ENCODE measurements at regions of chr12 and their contacts with region 1.

Region 1: GRCh38 chr12:52278541-52279421 is 4.3 kb downstream of the KRT86 start:
- DNase-seq: peak; percentile 44 to 60 (median 55)
- H3K4me3 ChIP-seq: no peak overlapping the region
- H3K4me3 Mint-ChIP-seq: peak overlapping the region in 5 of 8 donors; percentile 6 to 55 (median 44)
- H3K27ac ChIP-seq: no peak overlapping the region
- H3K27ac Mint-ChIP-seq: no peak overlapping the region
- H3K4me1 ChIP-seq: no peaks in the 10 kb centered on the region
- H3K4me1 Mint-ChIP-seq: peaks cover 3 to 5% (median 3%) of the 10 kb centered on the region in 4 donors
- H3K27me3 ChIP-seq: no peaks in the 10 kb centered on the region
- H3K27me3 Mint-ChIP-seq: peaks cover 8 to 13% of the 10 kb centered on the region in 2 donors

Region 2: GRCh38 chr12:52221912-52222457 is 56.8 kb before region 1 on chr12:
- CTCF ChIA-PET with region 1: interaction called, 20 read pairs
- POLR2A ChIA-PET with region 1: no interaction called
- intact Hi-C with region 1: no loop called
- DNase-seq: peak in 3 of 5 donors; percentile 13 to 58 (median 16)
- H3K4me3 ChIP-seq: no peak overlapping the region
- H3K4me3 Mint-ChIP-seq: no peak overlapping the region
- H3K27ac ChIP-seq: no peak overlapping the region
- H3K27ac Mint-ChIP-seq: no peak overlapping the region
- H3K4me1 ChIP-seq: no peaks in the 10 kb centered on the region
- H3K4me1 Mint-ChIP-seq: peaks cover 0 to 2% (median 0%) of the 10 kb centered on the region in 4 donors
- H3K27me3 ChIP-seq: peaks cover 8% of the 10 kb centered on the region
- H3K27me3 Mint-ChIP-seq: peaks cover 16 to 41% of the 10 kb centered on the region in 2 donors

Region 3: GRCh38 chr12:52250048-52250990 is 28.5 kb before region 1 on chr12:
- CTCF ChIA-PET with region 1: interaction called, 14 read pairs
- POLR2A ChIA-PET with region 1: no interaction called
- intact Hi-C with region 1: no loop called
- DNase-seq: no peak
- H3K4me3 ChIP-seq: no peak overlapping the region
- H3K4me3 Mint-ChIP-seq: peak overlapping the region in 2 of 8 donors; percentile 10 to 54
- H3K27ac ChIP-seq: no peak overlapping the region
- H3K27ac Mint-ChIP-seq: peak overlapping the region in 3 of 7 donors; percentile 25 to 81 (median 46)
- H3K4me1 ChIP-seq: peaks cover 8% of the 10 kb centered on the region
- H3K4me1 Mint-ChIP-seq: peaks cover 10 to 41% (median 13%) of the 10 kb centered on the region in 4 donors
- H3K27me3 ChIP-seq: no peaks in the 10 kb centered on the region
- H3K27me3 Mint-ChIP-seq: peaks cover 4 to 23% of the 10 kb centered on the region in 2 donors

Region 4: GRCh38 chr12:52295663-52296062 is 16.9 kb after region 1 on chr12:
- CTCF ChIA-PET with region 1: interaction called, 22 read pairs
- POLR2A ChIA-PET with region 1: no interaction called
- intact Hi-C with region 1: no loop called
- DNase-seq: no peak
- H3K4me3 ChIP-seq: no peak overlapping the region
- H3K4me3 Mint-ChIP-seq: no peak overlapping the region
- H3K27ac ChIP-seq: no peak overlapping the region
- H3K27ac Mint-ChIP-seq: peak overlapping the region in 1 of 7 donors; percentile 10
- H3K4me1 ChIP-seq: no peaks in the 10 kb centered on the region
- H3K4me1 Mint-ChIP-seq: peaks cover 0 to 2% (median 0%) of the 10 kb centered on the region in 4 donors
- H3K27me3 ChIP-seq: no peaks in the 10 kb centered on the region
- H3K27me3 Mint-ChIP-seq: peaks cover 13 to 19% of the 10 kb centered on the region in 2 donors

Region 5: GRCh38 chr12:52327052-52327829 is 48.5 kb after region 1 on chr12:
- CTCF ChIA-PET with region 1: interaction called, 20 read pairs
- POLR2A ChIA-PET with region 1: no interaction called
- intact Hi-C with region 1: loop called (anchors 5 kb)
- DNase-seq: peak; percentile 76 to 84 (median 80)
- H3K4me3 ChIP-seq: no peak overlapping the region
- H3K4me3 Mint-ChIP-seq: peak overlapping the region in 1 of 8 donors; percentile 2
- H3K27ac ChIP-seq: no peak overlapping the region
- H3K27ac Mint-ChIP-seq: peak overlapping the region in 2 of 7 donors; percentile 36 to 75
- H3K4me1 ChIP-seq: peaks cover 3% of the 10 kb centered on the region
- H3K4me1 Mint-ChIP-seq: peaks cover 5 to 7% (median 6%) of the 10 kb centered on the region in 4 donors
- H3K27me3 ChIP-seq: no peaks in the 10 kb centered on the region
- H3K27me3 Mint-ChIP-seq: peaks cover 7 to 12% of the 10 kb centered on the region in 2 donors

Region 6: DNA sequence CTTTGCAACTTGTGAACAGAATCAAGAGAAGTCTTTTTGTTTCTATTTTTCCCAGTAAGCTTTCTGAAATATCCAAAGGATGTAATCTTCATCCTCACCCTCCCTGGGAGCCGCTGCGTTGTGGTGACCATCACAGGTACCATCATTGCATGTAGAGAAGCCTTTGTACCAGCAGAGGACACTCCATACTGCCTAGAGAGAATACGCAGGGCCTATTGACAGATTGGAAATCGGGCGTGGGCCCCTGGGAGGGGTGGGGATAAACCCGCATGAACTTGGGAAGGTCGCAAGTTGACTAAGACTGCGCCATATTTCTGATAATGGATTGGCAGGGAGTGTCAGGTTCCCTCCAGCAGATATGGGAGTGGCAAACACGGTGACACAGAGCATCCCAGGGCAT is 388.7 kb after region 1 on chr12:
- CTCF ChIA-PET with region 1: no interaction called
- POLR2A ChIA-PET with region 1: no interaction called
- intact Hi-C with region 1: no loop called
- DNase-seq: no peak
- H3K4me3 ChIP-seq: no peak overlapping the region
- H3K4me3 Mint-ChIP-seq: no peak overlapping the region
- H3K27ac ChIP-seq: no peak overlapping the region
- H3K27ac Mint-ChIP-seq: no peak overlapping the region
- H3K4me1 ChIP-seq: no peaks in the 10 kb centered on the region
- H3K4me1 Mint-ChIP-seq: peaks cover under 1 to 6% (median 3%) of the 10 kb centered on the region in 4 donors
- H3K27me3 ChIP-seq: no peaks in the 10 kb centered on the region
- H3K27me3 Mint-ChIP-seq: peaks cover 3 to 10% of the 10 kb centered on the region in 2 donors

Measured in CD4-positive, alpha-beta memory T cell (primary cell).